SK-N-SH (cell line): ENCODE measurements at regions of chr5 and their contacts with region 1.

Region 1: DNA sequence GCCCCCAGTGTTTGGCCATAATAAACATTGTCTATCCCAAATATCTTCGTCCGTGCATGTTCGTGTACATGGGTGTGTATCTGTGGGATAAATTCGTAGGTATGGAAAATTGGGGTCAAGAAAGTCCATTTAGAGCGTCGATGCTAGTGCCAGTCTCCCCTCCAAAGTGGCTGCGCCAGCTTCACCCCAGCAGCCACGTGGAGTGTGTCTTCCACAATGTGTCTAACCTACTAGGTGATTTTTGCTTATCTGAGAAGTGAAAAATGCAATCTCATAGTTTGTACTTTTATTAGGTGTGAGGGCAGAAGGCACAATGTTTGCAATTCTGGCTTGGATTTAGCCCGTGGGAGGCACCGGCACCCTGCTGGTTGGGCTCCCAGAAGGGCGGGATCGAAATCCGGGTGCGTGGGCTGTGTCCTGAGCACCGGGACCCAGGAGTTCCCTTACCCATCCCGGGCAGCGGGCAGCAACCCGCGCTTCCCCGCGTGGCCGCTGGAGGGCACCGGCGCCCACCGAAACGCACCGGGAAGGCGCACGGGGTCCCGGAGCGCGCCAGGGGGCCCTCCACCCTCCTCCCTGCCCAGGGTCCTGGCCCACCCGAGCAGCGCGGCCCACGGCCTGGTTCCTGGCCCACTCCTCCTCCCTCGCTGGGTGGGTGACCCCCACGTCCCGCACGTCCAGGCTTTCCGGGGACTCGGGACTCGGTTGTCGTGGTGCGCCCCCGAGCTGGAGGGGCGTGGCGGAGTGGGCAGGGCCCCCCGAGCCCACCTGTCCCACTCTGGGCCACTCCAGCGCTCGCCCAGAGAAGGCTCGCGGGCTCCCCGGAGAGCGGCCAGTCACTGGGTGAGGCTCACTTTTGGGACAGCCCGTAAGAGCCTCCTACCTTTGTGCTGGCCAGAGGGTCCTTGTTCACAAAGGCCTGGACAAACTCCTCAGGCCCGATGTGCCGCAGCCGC is 55.4 kb upstream of the RNF130 start:
- DNase-seq: peak; percentile 92
- H3K4me3 ChIP-seq: peak overlapping the region; percentile 27 to 41; a peak in 2 of 4 replicates
- H3K27ac ChIP-seq: no peak overlapping the region
- H3K4me1 ChIP-seq: peaks cover 0 to 6% of the 10 kb centered on the region in 2 experiments; a peak in 1 of 4 replicates
- H3K27me3 ChIP-seq: peaks cover 9% of the 10 kb centered on the region; the same call in 1 of the 2 replicates
- CTCF ChIP-seq: peak; percentile 74
- EP300 ChIP-seq: no peak
- RAD21 ChIP-seq: peak; percentile 80

Region 2: DNA sequence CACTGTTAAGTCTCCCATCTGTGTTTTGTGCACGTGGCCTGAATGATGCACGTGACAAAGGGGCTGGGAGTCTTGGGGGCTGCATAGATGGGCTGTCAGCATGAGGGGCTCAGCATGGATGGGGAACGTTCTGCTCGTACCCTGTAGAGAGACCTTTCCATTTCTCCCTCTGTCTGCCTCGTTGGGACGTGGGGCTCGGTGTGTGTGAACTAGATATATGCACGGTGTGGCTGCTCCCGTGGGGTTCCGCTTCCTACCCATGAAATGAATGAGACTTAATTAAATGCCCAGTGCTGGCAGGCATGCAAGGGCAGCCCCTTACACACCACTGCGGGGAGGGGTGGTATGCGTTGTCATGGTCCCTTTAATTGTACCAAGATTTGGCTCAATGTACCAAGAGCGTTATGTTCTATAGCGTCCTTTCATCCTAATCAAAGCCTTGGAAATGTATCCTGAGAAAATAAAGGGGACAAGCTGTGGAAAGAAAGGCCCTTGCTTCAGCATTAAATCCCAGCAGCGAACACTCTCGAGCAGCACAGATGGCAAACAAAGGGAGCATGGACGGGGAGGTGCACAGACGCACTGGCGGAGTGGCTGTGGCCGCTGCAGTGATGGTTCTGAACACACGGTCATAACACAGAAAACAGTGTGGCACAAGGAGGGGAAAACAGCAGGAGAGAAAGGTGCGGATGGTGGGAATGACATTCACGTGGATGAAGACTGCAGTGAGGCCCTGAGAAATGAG is 15.2 kb after region 1 on chr5:
- CTCF ChIA-PET with region 1: interaction called, 30 read pairs
- POLR2A ChIA-PET with region 1: no interaction called
- DNase-seq: no peak
- H3K4me3 ChIP-seq: no peak overlapping the region
- H3K27ac ChIP-seq: no peak overlapping the region
- H3K4me1 ChIP-seq: no peaks in the 10 kb centered on the region; a peak in 1 of 4 replicates
- H3K27me3 ChIP-seq: no peaks in the 10 kb centered on the region
- CTCF ChIP-seq: no peak
- EP300 ChIP-seq: no peak
- RAD21 ChIP-seq: no peak